ENCODE measurements at regions of chr3 and their contacts with region 1.

Region 1: GRCh38 chr3:43326891-43327581 is 40.7 kb downstream of the SNRK start:
- DNase-seq: no peak
- ATAC-seq: peak; percentile 89

Region 2: GRCh38 chr3:43290956-43291355 is 36.1 kb before region 1 on chr3:
- intact Hi-C with region 1: loop called (anchors 5 kb)
- DNase-seq: no peak
- ATAC-seq: no peak

Measured in left ventricle myocardium superior (tissue), 1 donor.